Esophagus muscularis mucosa (tissue), 4 donors: ENCODE measurements at regions of chr1 and their contacts with region 1.

Region 1: GRCh38 chr1:246117066-246117791 is 389.9 kb downstream of the SMYD3 start:
- DNase-seq: no peak
- H3K4me3 ChIP-seq: no peak overlapping the region
- H3K27ac ChIP-seq: no peak overlapping the region
- H3K4me1 ChIP-seq: peaks cover 0 to 34% (median 18%) of the 10 kb centered on the region in 4 donors
- H3K27me3 ChIP-seq: no peaks in the 10 kb centered on the region
- CTCF ChIP-seq: peak; percentile 50 to 59 (median 58)
- EP300 ChIP-seq: no peak
- POLR2A ChIP-seq: no peak

Region 2: GRCh38 chr1:246012341-246012740 is 104.9 kb before region 1 on chr1:
- intact Hi-C with region 1: loop called (anchors 5 kb)
- DNase-seq: no peak
- H3K4me3 ChIP-seq: no peak overlapping the region
- H3K27ac ChIP-seq: no peak overlapping the region
- H3K4me1 ChIP-seq: peaks cover 0 to 14% (median 6%) of the 10 kb centered on the region in 4 donors
- H3K27me3 ChIP-seq: no peaks in the 10 kb centered on the region
- CTCF ChIP-seq: peak; percentile 67 to 71 (median 70)
- EP300 ChIP-seq: no peak
- POLR2A ChIP-seq: no peak

Region 3: GRCh38 chr1:246428542-246429308 is 311.5 kb after region 1 on chr1:
- intact Hi-C with region 1: no loop called
- DNase-seq: no peak
- H3K4me3 ChIP-seq: no peak overlapping the region
- H3K27ac ChIP-seq: no peak overlapping the region
- H3K4me1 ChIP-seq: no peaks in the 10 kb centered on the region
- H3K27me3 ChIP-seq: no peaks in the 10 kb centered on the region
- CTCF ChIP-seq: no peak
- EP300 ChIP-seq: no peak
- POLR2A ChIP-seq: no peak